ENCODE measurements at regions of chr10 and their contacts with region 1.

Region 1: GRCh38 chr10:70221030-70221429 is 12.2 kb downstream of the PPA1 start:
- DNase-seq: no peak
- H3K4me3 ChIP-seq: no peak overlapping the region
- CTCF ChIP-seq: no peak

Region 2: DNA sequence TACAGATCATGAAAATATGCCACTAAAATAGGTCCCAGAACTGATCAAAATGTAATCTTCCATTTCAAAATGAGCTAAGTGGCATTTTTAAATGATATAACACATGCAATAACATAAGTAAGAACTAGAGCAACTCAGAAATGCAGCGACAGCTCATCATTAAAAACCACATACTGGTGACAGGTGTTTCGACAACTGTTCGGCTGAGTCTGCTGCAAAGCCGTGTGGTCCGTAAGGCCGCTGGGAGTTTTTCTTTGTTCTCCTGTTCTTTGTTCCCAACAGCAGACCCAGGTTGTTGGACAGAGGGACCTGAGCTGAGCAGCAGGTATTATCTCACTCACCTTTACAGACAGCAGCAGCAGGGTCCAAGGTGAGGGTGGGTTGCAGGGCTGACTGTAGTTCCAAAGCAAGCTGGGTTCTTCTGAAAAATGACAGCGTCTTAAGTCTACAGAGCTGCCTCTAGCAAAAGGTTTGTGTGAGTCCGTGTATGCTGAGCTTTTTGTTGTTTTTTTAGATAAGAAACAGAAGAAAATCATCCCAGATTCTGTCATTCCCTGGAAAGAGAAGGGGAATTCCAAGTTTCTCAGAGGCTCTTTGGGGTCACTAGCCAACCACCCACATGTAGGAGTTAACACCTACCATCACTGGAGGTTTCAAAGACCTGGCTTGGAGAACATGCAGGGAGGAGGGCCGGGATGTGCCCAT is 213.8 kb before region 1 on chr10:
- CTCF ChIA-PET with region 1: no interaction called
- POLR2A ChIA-PET with region 1: no interaction called
- DNase-seq: no peak
- H3K4me3 ChIP-seq: no peak overlapping the region
- CTCF ChIP-seq: no peak

Region 3: DNA sequence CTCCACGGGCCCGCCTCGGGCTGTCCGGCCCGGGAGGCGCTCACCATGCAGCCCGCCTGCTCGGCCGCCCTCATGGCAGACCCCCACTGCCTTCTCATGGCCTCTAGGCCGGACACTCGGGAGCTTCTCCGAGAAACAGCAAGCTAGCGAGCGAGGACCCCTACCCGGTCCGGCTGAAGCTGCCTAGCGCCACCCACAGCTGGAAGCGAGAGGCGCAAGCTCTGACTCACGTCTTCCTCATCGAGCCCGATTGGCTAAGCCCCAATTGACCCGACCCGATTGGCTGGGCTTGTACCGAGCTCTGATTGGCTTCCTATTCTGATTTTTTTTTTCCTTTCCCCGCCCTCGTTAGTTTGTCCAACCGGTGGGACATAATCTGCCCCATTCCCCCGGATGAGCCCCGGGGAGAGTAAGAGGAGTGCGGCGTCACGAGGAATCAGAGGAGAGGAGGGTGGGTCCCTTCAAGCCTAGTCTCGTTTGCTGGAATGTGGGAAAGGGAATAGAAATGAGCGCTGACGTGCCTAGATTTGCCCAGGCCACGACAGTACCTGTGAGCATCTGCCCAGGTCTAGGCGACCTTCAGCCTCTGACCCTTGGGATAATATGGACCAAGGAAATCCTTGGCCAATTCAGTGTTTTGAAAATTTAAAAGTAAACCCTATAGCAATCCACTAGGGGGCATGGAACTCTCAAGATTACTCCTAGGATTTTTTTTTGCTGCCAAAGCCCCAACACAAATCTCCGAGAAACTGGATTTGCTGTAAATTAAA is 74.4 kb before region 1 on chr10 and contains the start of gene TYSND1:
- CTCF ChIA-PET with region 1: interaction called, 14 read pairs
- POLR2A ChIA-PET with region 1: interaction called, 3 read pairs
- DNase-seq: peak; percentile 82
- H3K4me3 ChIP-seq: peak within 1 kb of the TSS; percentile 66
- CTCF ChIP-seq: peak; percentile 91

Region 4: GRCh38 chr10:70267161-70267933 is 46.3 kb after region 1 on chr10:
- CTCF ChIA-PET with region 1: interaction called, 13 read pairs
- POLR2A ChIA-PET with region 1: no interaction called
- DNase-seq: peak; percentile 80
- H3K4me3 ChIP-seq: no peak overlapping the region
- CTCF ChIP-seq: peak; percentile 20

Region 5: DNA sequence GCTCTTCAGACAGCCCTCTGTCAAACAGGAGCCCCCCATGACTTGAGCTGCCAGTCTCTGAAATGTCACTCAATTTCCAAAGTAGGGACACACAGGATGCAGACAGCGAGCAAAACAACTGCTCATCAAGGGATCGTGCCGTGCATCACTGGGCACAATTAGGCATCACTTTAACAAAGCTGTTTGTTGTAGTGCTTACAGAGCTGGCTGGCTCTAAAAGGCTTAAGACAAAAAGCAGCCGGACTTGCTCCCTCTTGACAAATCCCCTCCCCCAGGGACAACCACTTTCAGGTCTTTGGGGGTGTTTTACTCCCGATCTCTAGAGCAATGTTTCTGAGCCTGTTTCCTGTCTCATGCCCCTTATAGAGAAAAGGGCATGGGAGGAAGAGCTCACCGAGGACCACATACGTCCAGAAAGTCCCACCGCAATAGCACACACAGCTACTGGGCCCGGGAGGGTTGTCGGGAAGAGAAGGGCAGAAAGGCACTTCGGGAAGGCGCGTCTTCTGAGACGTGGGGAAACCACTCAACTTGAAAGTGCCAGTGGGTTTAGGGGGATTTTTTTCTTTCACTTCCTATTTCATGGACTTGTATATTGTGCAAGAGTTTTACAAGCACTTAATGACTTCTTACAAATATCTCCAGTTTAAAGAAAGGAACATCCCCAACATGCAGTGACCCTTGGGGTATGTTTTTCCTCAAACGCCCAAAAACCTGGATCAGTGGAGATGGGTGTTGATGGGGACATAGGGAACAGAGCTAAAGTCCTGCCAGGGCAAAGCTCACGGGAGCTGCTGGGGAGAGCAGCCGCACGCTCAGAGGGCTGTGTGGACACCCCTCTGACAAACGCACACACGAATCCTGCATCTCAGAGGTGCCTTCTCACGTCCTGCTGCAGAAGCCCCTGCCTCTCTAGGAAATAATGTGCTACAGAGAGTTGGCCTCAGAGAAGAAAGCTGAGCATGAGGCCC is 134.3 kb after region 1 on chr10:
- CTCF ChIA-PET with region 1: interaction called, 533 read pairs
- POLR2A ChIA-PET with region 1: no interaction called
- DNase-seq: no peak
- H3K4me3 ChIP-seq: no peak overlapping the region
- CTCF ChIP-seq: no peak

Region 6: GRCh38 chr10:70540089-70540788 is 319.2 kb after region 1 on chr10:
- CTCF ChIA-PET with region 1: interaction called, 10 read pairs
- POLR2A ChIA-PET with region 1: no interaction called
- DNase-seq: no peak
- H3K4me3 ChIP-seq: no peak overlapping the region
- CTCF ChIP-seq: peak; percentile 77